ENCODE measurements at regions of chr1 and their contacts with region 1.

Region 1: GRCh38 chr1:46718727-46719622 is at the start of gene EFCAB14:
- DNase-seq: peak; percentile 99
- total RNA-seq, gene EFCAB14: 53.7 TPM

Region 2: DNA sequence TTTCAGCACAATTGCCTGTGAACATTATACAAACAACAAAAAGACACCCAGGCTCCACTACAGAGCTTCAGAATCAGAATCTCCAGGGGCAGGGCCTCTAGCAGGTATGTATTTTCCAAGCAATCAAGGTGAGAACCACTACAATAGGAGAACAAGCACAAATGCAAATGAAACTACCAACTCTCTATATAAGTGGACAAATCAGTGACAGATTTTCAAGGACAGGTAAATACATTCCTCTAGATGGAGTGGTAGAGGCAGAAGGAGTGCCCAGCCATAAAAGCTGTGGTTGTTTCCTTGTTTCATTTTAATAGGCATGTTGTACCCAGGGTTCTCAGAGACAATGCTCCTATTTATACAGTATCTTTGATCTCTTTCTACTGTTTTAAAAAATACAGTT is 1075.0 kb before region 1 on chr1:
- intact Hi-C with region 1: no loop called
- DNase-seq: no peak

Region 3: DNA sequence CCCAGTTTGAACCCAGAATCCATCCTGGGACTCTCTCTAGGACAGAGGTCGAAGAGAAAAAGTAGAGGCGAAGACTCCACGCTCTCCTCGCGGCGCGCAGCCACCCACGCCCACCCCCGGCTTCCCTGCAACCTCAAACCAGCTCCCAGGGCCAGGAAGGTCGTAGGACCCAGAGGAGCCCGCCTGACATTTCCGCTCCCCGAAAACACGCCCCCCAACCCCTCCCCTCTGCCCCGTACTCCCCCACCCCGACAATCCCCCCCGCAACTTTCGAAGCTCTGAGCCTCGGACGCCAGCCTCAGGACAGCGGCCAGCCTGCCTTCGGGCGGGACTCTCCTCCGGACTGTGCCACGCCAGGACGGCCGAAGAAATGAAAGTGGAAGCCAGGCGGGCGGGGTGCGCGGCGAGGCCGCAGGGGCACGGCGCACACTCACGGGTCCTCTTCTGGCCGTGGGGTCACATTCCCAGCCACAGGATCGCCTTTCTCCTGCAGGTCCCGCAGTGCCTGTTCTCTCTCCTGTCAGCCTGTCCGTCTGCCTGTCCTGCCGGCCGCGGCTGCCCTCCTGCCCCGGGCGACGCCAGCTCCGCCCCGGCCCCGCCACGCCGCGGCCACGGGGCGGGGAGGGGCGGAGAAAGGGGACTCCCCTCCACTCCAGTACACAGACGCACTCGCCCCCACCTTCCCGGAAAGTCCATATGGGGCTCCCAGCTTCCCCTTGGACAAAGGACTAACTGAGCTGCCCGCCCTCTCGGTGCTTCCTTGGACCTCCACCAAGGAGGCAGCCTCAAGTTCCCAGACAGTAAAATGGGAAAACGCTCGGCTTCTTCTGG is 102.5 kb before region 1 on chr1 and contains the start of gene MOB3C:
- intact Hi-C with region 1: loop called (anchors 5 kb)
- DNase-seq: peak; percentile 94
- total RNA-seq, gene MOB3C: 14.9 TPM

Region 4: DNA sequence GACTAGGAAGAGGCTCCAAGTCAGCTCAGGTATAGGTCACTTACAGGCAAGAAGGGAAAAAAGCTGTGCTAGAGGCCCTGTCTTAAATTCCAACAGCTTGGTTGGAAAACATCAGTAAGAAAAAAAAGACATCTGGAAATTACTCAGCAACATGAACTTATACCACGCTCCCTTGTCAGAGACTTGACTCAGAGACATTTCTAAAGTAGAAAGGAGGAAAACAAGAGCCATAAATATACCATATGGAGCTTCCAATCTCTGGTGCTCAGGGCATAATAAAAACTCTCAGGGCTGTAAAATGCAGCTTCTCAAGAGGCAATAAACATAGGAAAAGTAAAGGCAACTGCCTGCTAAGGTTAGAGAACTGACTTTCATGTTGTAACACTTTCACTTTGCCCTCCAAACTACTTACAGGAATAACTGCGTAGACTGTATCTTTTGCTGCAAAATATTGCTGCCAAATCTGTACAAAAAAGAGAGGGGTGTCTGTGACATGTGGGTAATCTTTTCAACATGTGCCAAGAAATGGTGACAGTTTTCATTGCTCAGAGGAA is 65.5 kb before region 1 on chr1:
- intact Hi-C with region 1: no loop called
- DNase-seq: no peak

Region 5: GRCh38 chr1:46667782-46668760 is 50.9 kb before region 1 on chr1 and contains the start of gene ATPAF1:
- intact Hi-C with region 1: loop called (anchors 1 kb)
- DNase-seq: peak; percentile 83
- total RNA-seq, gene ATPAF1: 190 TPM